GM12878 (cell line): ENCODE measurements at regions of chr3 and their contacts with region 1.

Region 1: DNA sequence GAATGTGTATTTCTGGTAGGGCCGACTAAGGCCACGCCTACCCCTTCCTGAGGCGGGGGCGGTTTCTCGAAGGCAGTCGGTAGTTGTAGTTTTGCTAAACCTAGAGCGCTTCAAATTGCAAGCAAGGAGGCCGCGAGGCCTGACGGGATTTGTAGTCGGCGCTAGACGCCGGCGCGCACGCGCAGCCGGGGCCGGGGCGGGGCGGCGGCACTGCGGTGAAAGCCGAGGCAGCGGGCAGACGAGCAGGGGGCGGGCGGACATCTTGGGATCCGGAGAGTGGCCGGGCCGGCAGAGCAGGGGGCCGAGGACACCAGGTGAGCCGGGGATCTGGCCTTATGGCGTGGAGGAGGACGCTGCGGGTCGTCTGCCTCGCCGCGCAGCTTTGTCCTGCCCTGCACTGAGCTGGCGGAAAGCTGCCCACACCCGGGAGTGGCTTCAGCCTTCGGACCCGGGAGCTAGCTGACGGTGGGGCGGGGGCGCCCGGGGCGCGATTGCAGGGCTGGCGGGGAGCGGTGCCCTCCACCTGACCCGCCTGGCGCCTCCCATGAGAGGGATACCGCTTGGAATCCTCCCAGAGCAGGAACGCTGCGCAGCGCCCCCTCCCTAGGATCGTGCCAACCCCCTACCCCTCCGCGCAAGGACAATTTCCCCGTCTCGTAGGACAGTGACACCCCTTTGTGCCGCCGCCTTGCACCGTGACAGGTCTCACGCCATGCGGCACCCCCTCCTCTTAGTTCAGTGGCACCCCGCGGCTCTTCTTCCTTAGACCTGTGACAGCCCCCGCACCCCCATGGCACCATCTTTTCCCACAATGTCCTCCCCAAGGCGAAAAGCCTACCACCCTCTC is at the start of gene AP2M1:
- DNase-seq: peak; percentile 93
- ATAC-seq: peak; percentile 97
- H3K4me3 ChIP-seq: peak within 1 kb of the TSS; percentile 81
- H3K27ac ChIP-seq: peak within 1 kb of the TSS; percentile 89
- H3K4me1 ChIP-seq: peaks cover 9% of the 10 kb centered on the region
- H3K27me3 ChIP-seq: no peaks in the 10 kb centered on the region
- CTCF ChIP-seq: 0 out of 6 replicates have a peak, but pooled peaks of 1 of the 3 experiments have one; percentile 5
- EP300 ChIP-seq: no peak
- POLR2A ChIP-seq: peak; percentile 94
- RAD21 ChIP-seq: no peak
- polyA plus RNA-seq, gene AP2M1: 65.6 to 68.9 TPM

Region 2: DNA sequence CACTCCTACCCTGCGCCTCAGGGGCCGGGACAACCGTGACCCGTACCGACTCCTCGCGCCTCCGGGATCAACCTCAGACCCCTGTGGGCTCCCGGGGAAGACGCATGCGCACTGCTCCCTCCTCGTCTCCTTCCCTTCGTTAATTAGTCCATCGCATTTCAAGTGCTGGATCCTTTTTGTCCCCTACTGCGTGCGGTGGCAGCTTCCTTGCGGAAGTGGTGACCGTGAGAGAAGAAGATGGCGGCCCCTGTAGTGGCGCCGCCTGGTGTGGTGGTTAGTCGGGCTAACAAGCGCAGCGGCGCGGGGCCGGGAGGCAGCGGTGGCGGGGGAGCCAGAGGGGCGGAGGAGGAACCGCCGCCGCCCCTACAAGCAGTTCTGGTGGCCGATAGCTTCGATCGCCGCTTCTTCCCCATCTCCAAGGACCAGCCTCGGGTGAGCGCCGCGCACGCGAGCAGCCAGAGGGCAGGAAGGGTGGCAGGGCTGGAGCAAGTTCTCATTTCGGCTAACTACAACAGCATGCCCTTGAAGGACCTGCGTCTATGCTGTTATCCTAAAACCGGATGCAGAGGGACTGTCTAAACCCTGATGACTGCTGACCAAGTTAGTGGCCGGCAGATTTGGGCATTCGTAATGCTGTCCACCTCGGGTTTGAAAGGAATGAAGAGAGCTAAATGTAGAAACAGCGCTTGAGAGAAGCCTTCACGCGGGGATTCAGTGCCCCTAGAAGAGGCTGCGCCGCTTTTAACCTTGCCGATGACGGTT is 39.5 kb before region 1 on chr3 and contains the start of gene EIF2B5:
- CTCF ChIA-PET with region 1: interaction called, 3 read pairs
- POLR2A ChIA-PET with region 1: interaction called, 5 read pairs
- RAD21 ChIA-PET with region 1: interaction called, 3 read pairs
- SMC1A ChIA-PET with region 1: interaction called, 4 read pairs
- in situ Hi-C with region 1: no loop called
- intact Hi-C with region 1: loop called (anchors 1 kb)
- DNase-seq: peak; percentile 84
- ATAC-seq: peak; percentile 92
- H3K4me3 ChIP-seq: peak within 1 kb of the TSS; percentile 95
- H3K27ac ChIP-seq: peak within 1 kb of the TSS; percentile 84
- H3K4me1 ChIP-seq: peaks cover 4% of the 10 kb centered on the region; the same call in 1 of the 2 replicates
- H3K27me3 ChIP-seq: no peaks in the 10 kb centered on the region
- CTCF ChIP-seq: peak; percentile 25 to 36 (median 35); a peak in 4 of 6 replicates
- EP300 ChIP-seq: no peak
- POLR2A ChIP-seq: peak; percentile 96
- RAD21 ChIP-seq: no peak
- polyA plus RNA-seq, gene EIF2B5: 13.7 to 23.6 TPM

Region 3: GRCh38 chr3:184160456-184160855 is 14.4 kb before region 1 on chr3:
- CTCF ChIA-PET with region 1: interaction called, 4 read pairs
- POLR2A ChIA-PET with region 1: interaction called, 16 read pairs
- RAD21 ChIA-PET with region 1: interaction called, 3 read pairs
- SMC1A ChIA-PET with region 1: interaction called, 4 read pairs
- in situ Hi-C with region 1: no loop called
- intact Hi-C with region 1: no loop called
- DNase-seq: no peak
- ATAC-seq: peak; percentile 59
- H3K4me3 ChIP-seq: no peak overlapping the region
- H3K27ac ChIP-seq: peak overlapping the region; percentile 20; the same call in 1 of the 2 replicates
- H3K4me1 ChIP-seq: peaks cover 9% of the 10 kb centered on the region
- H3K27me3 ChIP-seq: no peaks in the 10 kb centered on the region
- CTCF ChIP-seq: no peak
- EP300 ChIP-seq: no peak
- POLR2A ChIP-seq: no peak
- RAD21 ChIP-seq: no peak

Region 4: GRCh38 chr3:184185461-184186308 is 10.8 kb after region 1 on chr3 and contains the start of gene ABCF3:
- CTCF ChIA-PET with region 1: interaction called, 4 read pairs
- POLR2A ChIA-PET with region 1: interaction called, 5 read pairs
- RAD21 ChIA-PET with region 1: interaction called, 4 read pairs
- SMC1A ChIA-PET with region 1: interaction called, 4 read pairs
- in situ Hi-C with region 1: no loop called
- intact Hi-C with region 1: loop called (anchors 1 kb)
- DNase-seq: peak; percentile 97
- ATAC-seq: peak; percentile 98
- H3K4me3 ChIP-seq: peak within 1 kb of the TSS; percentile 93
- H3K27ac ChIP-seq: peak within 1 kb of the TSS; percentile 73
- H3K4me1 ChIP-seq: 0 out of 2 replicates have a peak, but pooled peaks cover 4% of the 10 kb centered on the region
- H3K27me3 ChIP-seq: no peaks in the 10 kb centered on the region
- CTCF ChIP-seq: no peak
- EP300 ChIP-seq: no peak
- POLR2A ChIP-seq: peak; percentile 89
- RAD21 ChIP-seq: no peak
- polyA plus RNA-seq, gene ABCF3: 6.1 to 8.1 TPM

Region 5: GRCh38 chr3:184298759-184299496 is 124.1 kb after region 1 on chr3 and contains the start of gene PSMD2:
- CTCF ChIA-PET with region 1: no interaction called
- POLR2A ChIA-PET with region 1: no interaction called
- RAD21 ChIA-PET with region 1: no interaction called
- SMC1A ChIA-PET with region 1: no interaction called
- in situ Hi-C with region 1: no loop called
- intact Hi-C with region 1: loop called (anchors 2 kb)
- DNase-seq: peak; percentile 73
- ATAC-seq: peak; percentile 98
- H3K4me3 ChIP-seq: peak within 1 kb of the TSS; percentile 88
- H3K27ac ChIP-seq: peak within 1 kb of the TSS; percentile 66
- H3K4me1 ChIP-seq: peaks cover 3% of the 10 kb centered on the region
- H3K27me3 ChIP-seq: no peaks in the 10 kb centered on the region
- CTCF ChIP-seq: no peak
- EP300 ChIP-seq: no peak
- POLR2A ChIP-seq: peak; percentile 88
- RAD21 ChIP-seq: no peak
- polyA plus RNA-seq, gene PSMD2: 103 to 111 TPM